Activated CD8-positive, alpha-beta memory T cell treated with anti-CD3 and anti-CD28 coated beads, Interleukin-2, amount 10 ng/mL, durations not matched to agents 7 days and 5 days (primary cell): ENCODE measurements at regions of chr5 and their contacts with region 1.

Region 1: DNA sequence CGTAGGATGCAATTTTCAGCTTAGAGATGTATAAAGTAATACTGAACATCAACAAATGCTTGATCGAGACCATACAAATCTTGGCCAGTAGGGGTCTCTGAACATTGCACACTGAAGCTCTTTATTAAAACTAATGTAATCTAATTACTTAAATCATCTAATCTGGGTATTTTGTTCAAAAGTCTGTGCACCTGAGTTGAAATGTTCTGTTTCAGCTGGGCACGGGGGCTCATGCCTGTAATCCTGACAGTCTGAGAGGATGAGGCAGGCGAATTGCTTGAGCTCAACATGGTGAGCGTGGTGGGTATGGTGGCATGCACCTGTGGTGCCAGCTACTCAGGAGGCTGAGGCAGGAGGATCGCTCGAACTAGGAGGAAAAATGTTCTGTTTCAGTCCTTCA is 41.0 kb downstream of the ESM1 start:
- DNase-seq: peak; percentile 65
- ATAC-seq: peak; percentile 71
- H3K4me3 Mint-ChIP-seq: no peak overlapping the region
- H3K27ac Mint-ChIP-seq: no peak overlapping the region
- H3K4me1 Mint-ChIP-seq: peaks cover 14% of the 10 kb centered on the region
- H3K27me3 Mint-ChIP-seq: peaks cover 3% of the 10 kb centered on the region

Region 2: DNA sequence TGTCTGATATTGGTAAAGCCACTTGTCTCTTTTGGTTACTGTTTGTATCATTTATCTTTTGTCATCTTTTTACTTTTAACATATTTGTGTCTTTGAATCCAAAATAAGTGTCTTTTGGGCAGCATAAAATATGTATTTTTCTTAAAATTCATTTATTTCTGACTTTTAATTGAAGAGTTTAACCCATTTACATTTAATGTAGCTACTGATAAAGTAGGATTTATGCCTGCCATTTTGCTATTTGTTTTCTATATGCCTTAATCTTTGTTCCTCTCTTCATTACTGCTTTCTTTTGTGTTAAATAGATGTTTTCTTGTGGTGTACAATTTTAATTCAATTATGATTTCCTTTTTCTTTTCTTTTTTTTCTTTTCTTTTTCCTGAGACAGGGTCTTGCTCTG is 19.9 kb before region 1 on chr5:
- CTCF ChIA-PET with region 1: interaction called, 17 read pairs
- DNase-seq: no peak
- ATAC-seq: no peak
- H3K4me3 Mint-ChIP-seq: no peak overlapping the region
- H3K27ac Mint-ChIP-seq: no peak overlapping the region
- H3K4me1 Mint-ChIP-seq: peaks cover 15% of the 10 kb centered on the region
- H3K27me3 Mint-ChIP-seq: peaks cover 23% of the 10 kb centered on the region

Region 3: DNA sequence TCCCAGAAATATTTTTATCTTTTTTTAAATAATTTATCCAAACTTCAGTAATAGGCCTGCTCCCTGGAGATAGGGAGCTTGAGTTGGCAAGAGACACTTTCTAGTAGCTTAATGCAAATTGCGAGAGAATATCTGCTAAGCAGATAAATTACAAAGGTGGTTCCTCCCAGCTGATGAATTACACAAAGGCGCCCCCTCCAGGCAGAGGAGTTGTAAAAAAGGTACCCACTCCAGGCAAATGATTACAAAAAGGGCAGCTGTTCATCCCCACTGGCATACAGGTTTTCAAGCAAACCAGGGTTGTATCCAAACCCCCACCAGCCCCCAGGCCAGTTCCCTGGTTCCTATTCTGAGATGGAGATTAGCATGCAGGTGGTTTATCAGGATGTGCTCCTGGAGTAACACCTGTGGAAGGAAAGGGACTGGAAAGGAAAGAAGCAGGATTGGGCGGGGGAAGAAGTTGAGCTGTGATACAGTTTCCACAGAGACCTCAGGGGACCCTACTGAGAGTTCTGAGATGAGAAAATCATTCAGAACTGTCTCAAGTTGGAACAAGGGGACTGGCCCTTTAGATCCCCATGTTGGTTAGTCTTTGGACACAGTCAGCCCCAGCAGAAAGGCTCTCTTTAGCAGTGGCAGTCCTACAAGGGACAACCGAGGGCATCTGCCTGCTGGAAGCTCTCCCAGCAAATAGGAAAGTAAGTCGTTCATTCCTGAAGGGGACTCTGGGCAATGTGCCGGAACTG is 15.5 kb after region 1 on chr5:
- CTCF ChIA-PET with region 1: interaction called, 31 read pairs
- DNase-seq: peak; percentile 57
- ATAC-seq: no peak
- H3K4me3 Mint-ChIP-seq: no peak overlapping the region
- H3K27ac Mint-ChIP-seq: no peak overlapping the region
- H3K4me1 Mint-ChIP-seq: peaks cover 2% of the 10 kb centered on the region
- H3K27me3 Mint-ChIP-seq: peaks cover 3% of the 10 kb centered on the region

Region 4: GRCh38 chr5:54981928-54982327 is 37.6 kb after region 1 on chr5:
- CTCF ChIA-PET with region 1: interaction called, 10 read pairs
- DNase-seq: no peak
- ATAC-seq: no peak
- H3K4me3 Mint-ChIP-seq: no peak overlapping the region
- H3K27ac Mint-ChIP-seq: no peak overlapping the region
- H3K4me1 Mint-ChIP-seq: peaks cover 23% of the 10 kb centered on the region
- H3K27me3 Mint-ChIP-seq: peaks cover 14% of the 10 kb centered on the region

Region 5: GRCh38 chr5:55062039-55062779 is 117.8 kb after region 1 on chr5:
- CTCF ChIA-PET with region 1: interaction called, 13 read pairs
- DNase-seq: peak; percentile 93
- ATAC-seq: peak; percentile 87
- H3K4me3 Mint-ChIP-seq: peak overlapping the region; percentile 64
- H3K27ac Mint-ChIP-seq: peak overlapping the region; percentile 92
- H3K4me1 Mint-ChIP-seq: peaks cover 74% of the 10 kb centered on the region
- H3K27me3 Mint-ChIP-seq: no peaks in the 10 kb centered on the region

Region 6: GRCh38 chr5:55146543-55147151 is 202.3 kb after region 1 on chr5:
- CTCF ChIA-PET with region 1: interaction called, 40 read pairs
- DNase-seq: peak; percentile 92
- ATAC-seq: peak; percentile 91
- H3K4me3 Mint-ChIP-seq: peak overlapping the region; percentile 38
- H3K27ac Mint-ChIP-seq: peak overlapping the region; percentile 75
- H3K4me1 Mint-ChIP-seq: peaks cover 43% of the 10 kb centered on the region
- H3K27me3 Mint-ChIP-seq: peaks cover 9% of the 10 kb centered on the region